ENCODE measurements at regions of chr16 and their contacts with region 1.

Region 1: DNA sequence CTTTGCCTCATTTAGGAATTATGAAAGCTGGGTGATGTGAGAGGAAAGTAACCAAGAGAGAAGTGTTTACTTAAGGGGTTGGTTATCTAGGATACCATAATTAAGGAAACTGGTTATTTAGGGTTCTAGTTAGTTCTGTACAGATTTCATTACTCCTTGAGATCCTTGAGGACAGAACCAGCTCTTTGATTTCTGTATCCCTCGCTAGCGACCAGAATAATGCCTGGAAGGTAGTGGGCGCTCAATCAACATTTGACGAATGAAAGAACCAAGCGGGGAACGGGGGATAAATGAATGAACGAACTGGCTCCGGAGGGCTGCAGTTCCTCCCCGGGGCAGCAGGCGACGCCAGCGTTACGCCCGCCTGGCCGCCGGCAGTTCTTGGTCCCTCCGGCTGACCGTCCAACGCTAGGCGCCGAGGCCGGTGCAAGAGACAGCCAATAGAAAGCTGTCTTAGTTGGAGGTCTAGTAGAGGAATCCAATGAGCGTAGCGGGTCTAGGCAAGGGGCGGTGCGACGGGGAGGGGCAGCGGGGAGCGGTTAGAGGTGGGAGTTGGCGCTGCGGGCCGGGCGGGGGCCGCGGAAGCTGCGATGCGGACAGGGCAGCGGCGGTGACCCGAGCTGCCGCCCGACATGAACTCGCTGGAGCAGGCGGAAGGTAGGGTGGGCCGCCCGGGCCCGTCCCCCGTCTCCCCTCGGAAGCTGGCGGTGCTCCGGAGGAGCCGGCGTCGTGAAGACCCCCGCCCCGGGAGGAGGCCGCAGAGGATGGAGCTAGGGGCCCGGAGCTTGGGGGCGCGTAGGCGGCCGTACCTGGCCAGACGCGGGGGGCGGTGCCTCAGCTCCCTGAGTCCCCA is at the start of gene CNEP1R1:
- DNase-seq: peak; percentile 93
- H3K4me3 ChIP-seq: peak within 1 kb of the TSS; percentile 85
- H3K27ac ChIP-seq: no peak within 1 kb of the TSS
- H3K27me3 ChIP-seq: no peaks in the 10 kb centered on the region
- CTCF ChIP-seq: peak; percentile 100
- polyA plus RNA-seq, gene CNEP1R1: 22.4 and 33.0 TPM in 2 replicates

Region 2: GRCh38 chr16:50011707-50012106 is 13.2 kb before region 1 on chr16:
- CTCF ChIA-PET with region 1: interaction called, 53 read pairs
- POLR2A ChIA-PET with region 1: no interaction called
- DNase-seq: no peak
- H3K4me3 ChIP-seq: no peak overlapping the region
- H3K27ac ChIP-seq: no peak overlapping the region
- H3K27me3 ChIP-seq: no peaks in the 10 kb centered on the region
- CTCF ChIP-seq: no peak

Region 3: DNA sequence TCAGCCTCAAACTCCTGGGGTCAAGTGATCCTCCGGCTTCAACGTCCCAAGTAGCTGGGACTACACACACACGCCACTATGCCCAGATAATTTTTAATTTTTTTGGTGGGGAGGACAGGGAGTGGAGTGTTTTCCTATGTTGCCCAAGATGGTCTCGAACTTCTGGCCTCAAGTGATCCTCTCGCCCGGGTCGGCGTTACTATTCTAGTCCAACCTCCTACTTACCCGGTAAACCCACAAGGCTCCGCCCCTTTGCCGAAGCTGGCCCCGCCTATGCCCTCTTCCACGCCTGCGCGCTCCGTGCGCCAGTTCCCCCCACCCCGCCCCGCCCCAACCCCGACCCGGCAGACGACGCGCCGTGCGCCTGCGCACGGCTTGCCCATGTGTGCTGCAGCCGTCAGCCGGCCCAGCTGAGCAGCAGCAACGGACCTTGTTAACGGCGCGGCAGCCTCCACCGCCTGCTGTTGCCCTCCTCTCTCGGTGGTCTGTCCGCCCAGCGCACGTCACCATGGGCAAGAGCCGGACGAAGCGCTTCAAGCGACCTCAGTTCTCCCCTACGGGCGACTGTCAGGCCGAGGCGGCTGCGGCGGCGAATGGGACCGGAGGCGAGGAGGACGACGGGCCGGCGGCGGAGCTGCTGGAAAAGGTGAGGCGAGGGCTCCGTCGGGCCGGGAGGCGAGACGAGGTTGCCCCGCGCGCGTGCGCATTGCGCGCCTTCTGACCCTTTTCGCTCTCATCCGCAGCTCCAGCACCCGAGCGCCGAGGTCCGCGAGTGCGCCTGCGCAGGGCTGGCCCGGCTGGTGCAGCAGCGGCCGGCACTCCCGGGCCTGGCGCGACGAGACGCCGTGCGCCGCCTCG is 40.9 kb after region 1 on chr16 and contains the start of gene HEATR3:
- CTCF ChIA-PET with region 1: interaction called, 63 read pairs
- POLR2A ChIA-PET with region 1: interaction called, 4 read pairs
- DNase-seq: peak; percentile 85
- H3K4me3 ChIP-seq: peak within 1 kb of the TSS; percentile 99
- H3K27ac ChIP-seq: peak within 1 kb of the TSS; percentile 84
- H3K27me3 ChIP-seq: no peaks in the 10 kb centered on the region
- CTCF ChIP-seq: no peak
- polyA plus RNA-seq, gene HEATR3: 15.0 and 17.1 TPM in 2 replicates

Region 4: DNA sequence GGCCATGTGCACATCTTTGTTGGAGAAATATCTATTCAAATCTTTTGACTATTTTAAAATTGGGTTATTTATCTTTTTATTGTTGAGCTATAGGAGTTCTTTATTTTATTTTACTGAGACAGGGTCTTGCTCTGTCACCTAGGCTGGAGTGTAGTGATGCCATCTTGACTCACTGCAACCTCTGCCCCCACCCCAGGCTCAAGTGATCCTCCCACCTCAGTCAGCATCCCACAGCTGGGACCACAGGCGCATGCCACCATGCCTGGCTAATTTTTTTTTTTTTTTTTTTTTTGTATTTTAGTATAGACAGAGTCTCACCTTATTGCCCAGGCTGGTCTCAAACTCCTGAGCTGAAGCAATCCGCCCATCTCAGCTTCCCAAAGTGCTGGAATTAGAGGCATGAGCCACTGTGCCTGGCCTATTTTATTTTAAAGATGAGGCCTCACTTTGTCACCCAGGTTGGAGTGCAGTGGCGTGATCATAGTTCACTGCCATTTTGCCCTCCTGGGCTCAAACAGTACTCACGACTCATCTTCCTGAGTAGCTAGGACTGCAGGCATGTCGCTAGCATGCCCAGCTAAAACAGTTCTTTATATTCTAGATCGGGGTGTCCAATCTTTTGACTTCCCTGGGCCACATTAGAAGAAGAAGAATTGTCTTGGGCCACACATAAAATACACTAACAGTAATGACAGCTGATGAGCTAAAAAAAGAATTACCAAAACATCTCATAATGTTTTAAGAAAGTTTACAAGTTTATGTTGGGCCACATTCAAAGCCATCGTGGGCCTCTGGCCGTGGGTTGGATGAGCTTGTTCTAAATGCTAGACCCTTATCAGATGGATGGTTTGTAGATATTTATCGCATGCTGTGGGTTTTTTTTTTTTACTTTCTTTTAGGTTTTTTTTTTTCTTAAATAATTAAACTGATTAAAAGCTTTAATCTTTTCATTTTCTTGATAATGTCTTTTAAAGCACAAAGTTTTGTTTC is 141.9 kb after region 1 on chr16:
- CTCF ChIA-PET with region 1: interaction called, 11 read pairs
- POLR2A ChIA-PET with region 1: no interaction called
- DNase-seq: no peak
- H3K4me3 ChIP-seq: no peak overlapping the region
- H3K27ac ChIP-seq: no peak overlapping the region
- H3K27me3 ChIP-seq: no peaks in the 10 kb centered on the region
- CTCF ChIP-seq: no peak

Region 5: DNA sequence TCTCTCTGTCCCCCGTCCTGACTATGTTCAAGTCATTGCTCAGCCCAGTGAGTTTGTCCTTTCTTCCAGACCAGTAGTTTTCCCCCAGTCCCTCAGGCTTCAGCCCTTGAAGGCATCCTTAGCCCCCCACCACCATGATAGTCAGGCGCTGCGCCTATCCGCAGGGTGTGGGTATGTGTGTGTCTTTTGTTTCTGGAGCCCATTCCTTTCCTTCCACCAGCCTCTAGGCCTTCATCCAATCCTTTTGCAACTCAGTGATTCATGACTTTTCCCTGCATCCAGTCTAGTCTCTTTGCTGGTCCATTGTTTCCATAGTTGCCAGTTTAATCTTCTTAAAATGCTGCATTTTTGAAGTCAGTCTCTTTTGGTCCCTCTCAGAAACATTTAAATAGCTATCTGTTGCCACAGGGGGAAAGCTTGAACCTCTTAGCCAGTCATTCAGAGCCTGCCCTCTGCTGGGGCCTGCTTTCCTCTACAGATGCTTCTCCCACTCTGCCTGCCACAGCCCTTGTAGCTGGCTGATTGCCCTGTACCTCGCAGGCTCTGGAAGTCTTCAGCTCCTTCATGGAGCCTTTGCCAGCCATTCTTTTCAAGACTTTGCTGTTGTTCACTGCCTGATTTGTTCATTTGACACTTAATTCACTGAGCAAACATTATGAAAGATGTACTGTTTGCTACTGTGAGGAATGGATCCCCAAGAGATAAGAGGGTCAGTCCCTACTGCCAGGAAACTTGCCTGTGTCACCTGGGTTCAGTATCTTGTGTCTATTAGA is 185.5 kb after region 1 on chr16:
- CTCF ChIA-PET with region 1: interaction called, 216 read pairs
- POLR2A ChIA-PET with region 1: no interaction called
- DNase-seq: peak; percentile 59
- H3K4me3 ChIP-seq: no peak overlapping the region
- H3K27ac ChIP-seq: no peak overlapping the region
- H3K27me3 ChIP-seq: no peaks in the 10 kb centered on the region
- CTCF ChIP-seq: peak; percentile 86

Region 6: GRCh38 chr16:50354629-50355456 is 329.9 kb after region 1 on chr16:
- CTCF ChIA-PET with region 1: interaction called, 35 read pairs
- POLR2A ChIA-PET with region 1: no interaction called
- DNase-seq: no peak
- H3K4me3 ChIP-seq: no peak overlapping the region
- H3K27ac ChIP-seq: no peak overlapping the region
- H3K27me3 ChIP-seq: no peaks in the 10 kb centered on the region
- CTCF ChIP-seq: peak; percentile 65

Region 7: DNA sequence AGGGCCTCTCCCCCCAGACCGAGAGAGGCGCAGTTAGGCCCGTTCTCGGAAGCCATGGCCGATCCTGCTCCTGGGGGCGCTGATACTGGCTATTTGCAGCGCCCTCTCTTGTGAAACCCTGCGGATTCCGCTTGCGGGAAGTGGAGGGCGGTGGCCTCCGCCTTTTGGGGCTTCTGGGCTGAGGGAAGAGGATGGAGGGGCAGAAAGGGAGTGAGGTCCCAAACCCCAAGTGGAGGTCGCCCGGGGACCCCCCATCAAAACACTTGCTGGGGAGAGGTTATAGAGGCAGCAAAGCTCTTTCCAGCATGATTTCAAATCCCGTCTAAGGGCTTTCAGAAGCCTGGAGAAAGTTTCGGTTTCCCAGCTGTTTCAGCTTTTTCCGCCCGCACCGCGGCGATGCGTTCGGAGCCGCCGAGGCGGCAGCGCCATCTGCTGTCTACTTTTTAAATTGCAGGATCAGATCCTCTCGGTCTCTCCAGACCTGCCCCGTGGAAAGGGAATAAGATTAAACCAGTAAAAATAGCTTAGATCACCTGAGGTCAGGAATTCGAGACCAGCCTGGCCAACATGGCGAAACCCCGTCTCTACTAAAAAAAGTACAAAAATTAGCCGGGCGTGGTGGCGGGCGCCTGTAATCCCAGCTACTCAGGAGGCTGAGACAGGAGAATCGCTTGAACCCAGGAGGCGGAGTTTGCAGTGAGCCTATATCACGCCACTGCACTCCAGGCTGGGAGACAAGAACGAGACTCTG is 640.4 kb after region 1 on chr16:
- CTCF ChIA-PET with region 1: interaction called, 56 read pairs
- POLR2A ChIA-PET with region 1: no interaction called
- DNase-seq: peak; percentile 32
- H3K4me3 ChIP-seq: peak overlapping the region; percentile 57
- H3K27ac ChIP-seq: no peak overlapping the region
- H3K27me3 ChIP-seq: no peaks in the 10 kb centered on the region
- CTCF ChIP-seq: peak; percentile 86